Calu3 (cell line): ENCODE measurements at regions of chr9 and their contacts with region 1.

Region 1: DNA sequence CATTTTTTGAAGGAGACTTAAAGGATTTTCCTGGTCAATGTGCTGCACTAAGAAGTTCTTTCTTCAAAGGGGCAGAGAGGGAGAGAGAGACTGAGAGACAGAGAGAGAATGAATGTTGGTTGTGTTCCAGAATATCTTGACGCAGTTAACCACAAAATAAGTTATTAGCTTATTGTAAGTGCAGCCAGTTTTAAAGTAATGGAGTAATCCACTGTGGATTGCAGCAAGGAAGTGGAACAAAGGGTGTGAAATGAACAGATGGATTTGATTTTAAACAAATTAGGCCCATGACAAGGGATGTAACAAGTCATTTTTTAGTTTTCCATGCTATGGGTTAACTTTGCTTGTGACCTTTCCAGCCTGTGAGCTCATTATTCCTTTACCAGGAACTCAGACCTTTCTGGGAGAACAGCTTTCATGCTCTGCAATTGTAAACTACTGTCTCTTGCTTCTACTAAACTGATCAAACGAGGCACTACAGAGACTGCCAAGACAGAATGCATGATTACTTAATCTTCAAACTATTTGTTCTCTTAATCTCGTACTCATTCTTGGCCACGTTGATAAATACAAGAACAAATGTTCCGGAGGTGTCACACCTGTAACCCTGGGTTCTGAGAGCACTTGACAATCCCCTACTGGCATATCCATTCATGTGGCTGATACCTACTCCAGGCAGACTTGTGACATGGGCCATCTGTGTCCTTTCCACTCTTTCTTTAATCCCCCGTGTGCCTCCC is 131.1 kb downstream of the TLE1 start:
- DNase-seq: peak; percentile 4
- H3K4me3 Mint-ChIP-seq: no peak overlapping the region
- H3K27ac Mint-ChIP-seq: peak overlapping the region; percentile 90
- H3K4me1 Mint-ChIP-seq: peaks cover 66% of the 10 kb centered on the region
- H3K27me3 Mint-ChIP-seq: no peaks in the 10 kb centered on the region
- CTCF ChIP-seq: no peak

Region 2: DNA sequence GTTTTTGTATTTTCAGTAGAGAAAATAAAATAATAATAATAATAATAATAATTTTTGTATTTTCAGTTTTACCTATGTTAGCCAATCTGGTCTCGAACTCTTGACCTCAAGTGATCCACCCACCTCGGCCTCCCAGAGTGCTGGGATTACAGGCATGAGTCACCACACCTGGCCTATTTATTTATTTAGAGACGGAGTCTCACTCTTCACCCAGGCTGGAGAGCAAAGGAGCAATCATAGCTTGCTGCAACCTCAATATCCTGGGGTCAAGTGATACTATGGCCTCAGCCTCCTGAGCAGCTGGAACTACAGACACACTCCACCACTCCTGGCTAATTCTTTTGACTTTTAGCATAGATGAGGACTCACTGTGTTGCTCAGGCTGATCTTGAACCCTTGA is 36.4 kb before region 1 on chr9:
- CTCF ChIA-PET with region 1: no interaction called
- intact Hi-C with region 1: loop called (anchors 5 kb)
- DNase-seq: peak; percentile 10
- H3K4me3 Mint-ChIP-seq: no peak overlapping the region
- H3K27ac Mint-ChIP-seq: no peak overlapping the region
- H3K4me1 Mint-ChIP-seq: peaks cover 9% of the 10 kb centered on the region
- H3K27me3 Mint-ChIP-seq: no peaks in the 10 kb centered on the region
- CTCF ChIP-seq: no peak

Region 3: GRCh38 chr9:81682797-81683196 is 124.5 kb after region 1 on chr9:
- CTCF ChIA-PET with region 1: no interaction called
- intact Hi-C with region 1: loop called (anchors 1 kb)
- DNase-seq: peak; percentile 13
- H3K4me3 Mint-ChIP-seq: no peak overlapping the region
- H3K27ac Mint-ChIP-seq: no peak overlapping the region
- H3K4me1 Mint-ChIP-seq: peaks cover 8% of the 10 kb centered on the region
- H3K27me3 Mint-ChIP-seq: no peaks in the 10 kb centered on the region
- CTCF ChIP-seq: no peak

Region 4: GRCh38 chr9:81848472-81848871 is 290.2 kb after region 1 on chr9:
- CTCF ChIA-PET with region 1: no interaction called
- intact Hi-C with region 1: loop called (anchors 10 kb)
- DNase-seq: no peak
- H3K4me3 Mint-ChIP-seq: no peak overlapping the region
- H3K27ac Mint-ChIP-seq: no peak overlapping the region
- H3K4me1 Mint-ChIP-seq: no peaks in the 10 kb centered on the region
- H3K27me3 Mint-ChIP-seq: no peaks in the 10 kb centered on the region
- CTCF ChIP-seq: peak; percentile 15